Activated CD4-positive, alpha-beta memory T cell treated with anti-CD3 and anti-CD28 coated beads for 36 hours (primary cell): ENCODE measurements at regions of chr9 and their contacts with region 1.

Region 1: GRCh38 chr9:133347985-133348717 is at the starts of genes MED22 and RPL7A:
- DNase-seq: peak; percentile 96
- H3K4me3 Mint-ChIP-seq: peak within 1 kb of the TSS; percentile 97
- H3K27ac Mint-ChIP-seq: peak within 1 kb of the TSS; percentile 98
- H3K4me1 Mint-ChIP-seq: peaks cover 38% of the 10 kb centered on the region
- H3K27me3 Mint-ChIP-seq: no peaks in the 10 kb centered on the region
- total RNA-seq, gene MED22: 20.8 to 20.9 TPM
- total RNA-seq, gene RPL7A: 3,340 to 3,454 TPM

Region 2: DNA sequence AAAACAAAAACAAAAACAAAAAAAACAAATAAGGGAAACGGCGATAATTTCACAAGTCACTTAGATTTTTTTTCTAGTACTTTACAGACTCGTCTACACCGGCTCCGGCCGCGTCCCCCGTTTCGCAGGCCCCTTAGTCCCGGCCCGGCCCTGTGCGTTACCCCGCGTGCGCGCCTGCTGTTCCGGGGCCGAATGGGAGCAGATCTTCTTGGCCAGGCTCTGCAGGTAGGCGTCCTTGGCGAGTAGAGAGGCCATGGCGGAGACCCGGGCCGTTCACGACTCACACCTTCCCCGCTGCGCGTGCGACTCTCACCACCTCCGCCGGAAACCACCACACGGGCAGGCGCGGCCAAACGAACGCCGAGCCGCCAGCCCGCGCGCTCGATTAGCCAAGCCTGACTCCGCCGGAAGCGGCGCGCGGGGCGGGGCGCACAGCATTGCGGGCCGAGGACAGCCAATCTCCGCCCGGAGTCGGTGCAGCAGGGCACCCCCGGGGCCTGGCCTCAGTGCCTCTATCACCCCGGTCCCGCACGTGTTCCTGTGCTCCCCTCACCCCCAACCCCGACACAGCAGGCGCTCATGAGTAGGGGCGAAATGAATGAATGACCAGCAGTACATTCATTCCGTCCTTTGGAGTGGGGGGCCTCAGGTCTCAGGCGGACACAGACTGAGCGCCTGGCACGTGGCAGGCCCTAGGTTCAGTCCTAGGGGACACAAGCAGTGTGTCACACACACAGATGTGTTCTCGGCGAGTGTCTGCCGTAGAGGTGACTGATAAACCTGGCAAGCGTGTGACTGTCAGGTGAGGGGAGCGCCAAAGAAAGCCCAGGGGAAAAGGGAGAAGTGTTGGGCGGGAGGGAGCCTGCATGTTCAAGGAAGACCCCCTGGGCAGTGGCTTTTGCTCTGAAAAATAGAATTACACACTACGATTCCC is 12.0 kb before region 1 on chr9 and contains the start of gene SURF6:
- CTCF ChIA-PET with region 1: interaction called, 8 read pairs
- POLR2A ChIA-PET with region 1: interaction called, 5 read pairs
- intact Hi-C with region 1: loop called (anchors 1 kb)
- DNase-seq: peak; percentile 96
- H3K4me3 Mint-ChIP-seq: peak within 1 kb of the TSS; percentile 96
- H3K27ac Mint-ChIP-seq: peak within 1 kb of the TSS; percentile 91
- H3K4me1 Mint-ChIP-seq: peaks cover 35% of the 10 kb centered on the region
- H3K27me3 Mint-ChIP-seq: no peaks in the 10 kb centered on the region
- total RNA-seq, gene SURF6: 16.9 to 18.2 TPM